ENCODE measurements at regions of chr20 and their contacts with region 1.

Region 1: GRCh38 chr20:25254986-25255680 is 7.2 kb downstream of the PYGB start:
- DNase-seq: peak; percentile 63
- ATAC-seq: peak; percentile 84 to 90

Region 2: DNA sequence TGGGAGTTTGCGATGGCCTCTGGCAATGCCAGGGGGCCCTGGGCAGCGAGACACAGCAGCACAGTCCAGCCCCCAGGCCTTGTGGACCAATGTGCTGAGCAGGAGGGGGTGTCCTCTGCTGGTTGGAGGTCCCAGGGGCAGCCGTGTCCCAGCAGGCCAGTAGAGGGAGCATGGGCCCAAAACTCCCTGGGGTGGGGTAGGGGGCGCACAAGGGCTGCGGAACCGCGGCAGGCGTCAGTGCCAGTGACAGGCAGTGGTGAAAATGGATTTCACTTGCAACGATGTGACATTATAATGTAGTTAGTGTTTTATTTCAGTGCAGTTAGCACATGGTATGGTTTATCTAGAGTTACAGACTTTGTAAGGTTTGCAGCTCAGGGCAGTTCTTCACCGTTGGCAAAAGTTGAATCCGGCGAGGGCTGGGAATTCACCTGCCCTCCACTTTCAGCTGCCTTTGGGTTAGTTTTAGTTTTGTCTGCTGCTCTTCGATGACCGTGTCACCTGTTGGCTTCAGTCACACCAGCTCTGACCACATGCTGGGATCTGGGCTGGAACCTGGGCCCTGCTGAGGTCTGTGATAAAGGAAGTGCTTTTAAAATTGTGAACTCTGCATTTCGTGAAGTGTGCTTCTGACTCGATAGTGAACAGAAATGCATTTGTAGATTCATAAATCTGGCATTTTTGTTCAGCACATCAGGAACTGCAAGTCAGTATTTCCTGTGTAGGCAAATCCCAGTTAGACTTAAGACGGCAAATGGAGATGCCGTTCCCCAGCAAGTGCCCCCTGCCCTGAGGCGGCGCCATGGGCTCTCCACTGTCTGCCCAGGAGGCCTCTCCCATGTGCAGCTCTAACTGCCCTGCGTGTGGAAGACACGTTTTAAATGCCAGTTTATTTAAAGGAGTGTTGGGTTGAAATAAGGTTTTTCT is 39.6 kb after region 1 on chr20:
- intact Hi-C with region 1: loop called in 1 of 2 experiments (anchors 5 kb)
- DNase-seq: peak; percentile 52
- ATAC-seq: peak; percentile 25 to 34